ENCODE measurements at regions of chr3 and their contacts with region 1.

Region 1: DNA sequence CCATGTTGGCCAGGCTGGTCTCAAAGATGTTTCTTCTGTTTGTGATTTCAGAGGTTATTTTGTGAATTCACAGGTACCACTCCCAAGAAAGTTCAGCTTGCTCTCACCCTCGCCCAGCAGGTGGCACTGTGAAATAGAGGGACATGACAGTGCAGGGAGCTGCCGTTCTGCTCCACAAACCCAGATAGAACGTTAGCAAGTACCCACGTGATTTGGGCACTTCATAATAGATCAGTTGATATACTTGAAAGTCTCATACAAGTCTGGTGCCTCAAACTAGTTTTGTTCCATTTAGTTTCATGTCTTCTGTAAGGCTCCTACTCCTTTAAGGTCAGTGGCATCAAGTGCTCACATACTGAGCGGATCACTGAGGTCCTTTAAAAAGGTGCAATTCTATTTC is 45.5 kb downstream of the FILIP1L start:
- DNase-seq: peak; percentile 69
- H3K4me3 ChIP-seq: no peak overlapping the region
- H3K27ac ChIP-seq: no peak overlapping the region
- H3K4me1 ChIP-seq: peaks cover 4% of the 10 kb centered on the region
- CTCF ChIP-seq: peak; percentile 84

Region 2: DNA sequence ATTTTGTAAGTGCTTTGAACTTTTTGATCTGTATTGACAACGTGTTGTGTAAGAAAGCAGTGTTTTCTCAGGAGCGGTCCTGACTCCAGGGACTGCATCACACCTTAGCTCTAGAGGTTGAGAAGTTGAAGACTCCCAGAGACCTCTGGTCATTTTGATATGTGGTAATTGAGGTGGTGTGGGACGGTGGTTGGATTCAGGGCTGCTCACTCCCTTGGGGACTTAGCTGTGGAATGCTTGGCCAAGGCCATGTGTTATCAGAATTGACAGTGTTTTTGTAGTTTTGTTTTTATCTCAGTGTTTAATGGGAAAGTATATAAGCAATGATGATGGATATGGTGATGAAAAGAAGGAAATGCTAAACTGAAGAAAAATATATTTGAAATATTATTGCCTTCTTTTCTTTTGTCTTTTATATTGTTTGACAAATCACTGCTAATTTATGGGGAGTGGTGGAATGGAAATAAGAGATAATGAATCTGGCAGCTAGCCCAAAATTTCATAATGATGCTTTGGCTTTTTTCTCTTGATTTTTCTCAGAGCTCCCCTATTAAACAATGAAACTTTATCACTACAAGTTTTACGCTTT is 235.1 kb before region 1 on chr3:
- CTCF ChIA-PET with region 1: no interaction called
- POLR2A ChIA-PET with region 1: no interaction called
- intact Hi-C with region 1: loop called (anchors 5 kb)
- DNase-seq: no peak
- H3K4me3 ChIP-seq: no peak overlapping the region
- H3K27ac ChIP-seq: no peak overlapping the region
- H3K4me1 ChIP-seq: no peaks in the 10 kb centered on the region
- CTCF ChIP-seq: no peak

Region 3: DNA sequence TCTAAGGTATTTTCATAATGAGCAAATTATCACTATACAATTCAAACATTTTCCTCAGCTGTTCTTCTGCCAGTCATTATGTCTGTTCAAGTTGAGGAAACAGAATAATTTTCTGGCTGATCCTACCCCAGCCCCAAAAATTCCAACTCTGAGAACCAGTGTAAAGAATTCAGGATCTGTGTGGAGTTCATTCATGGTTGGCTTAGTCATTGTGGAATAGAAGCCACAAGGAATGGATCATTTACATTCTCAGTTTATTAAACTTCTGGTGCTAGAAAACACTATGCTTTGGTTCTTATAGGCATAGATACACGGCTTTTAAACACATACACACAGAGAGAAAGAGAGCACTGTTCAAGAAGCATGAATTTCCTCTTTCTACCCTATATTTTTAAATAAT is 116.5 kb before region 1 on chr3:
- CTCF ChIA-PET with region 1: no interaction called
- POLR2A ChIA-PET with region 1: no interaction called
- intact Hi-C with region 1: no loop called
- DNase-seq: no peak
- H3K4me3 ChIP-seq: no peak overlapping the region
- H3K27ac ChIP-seq: no peak overlapping the region
- H3K4me1 ChIP-seq: no peaks in the 10 kb centered on the region
- CTCF ChIP-seq: no peak

Region 4: GRCh38 chr3:99962703-99963102 is 106.1 kb before region 1 on chr3:
- CTCF ChIA-PET with region 1: no interaction called
- POLR2A ChIA-PET with region 1: no interaction called
- intact Hi-C with region 1: no loop called
- DNase-seq: no peak
- H3K4me3 ChIP-seq: no peak overlapping the region
- H3K27ac ChIP-seq: no peak overlapping the region
- H3K4me1 ChIP-seq: no peaks in the 10 kb centered on the region
- CTCF ChIP-seq: no peak

Region 5: DNA sequence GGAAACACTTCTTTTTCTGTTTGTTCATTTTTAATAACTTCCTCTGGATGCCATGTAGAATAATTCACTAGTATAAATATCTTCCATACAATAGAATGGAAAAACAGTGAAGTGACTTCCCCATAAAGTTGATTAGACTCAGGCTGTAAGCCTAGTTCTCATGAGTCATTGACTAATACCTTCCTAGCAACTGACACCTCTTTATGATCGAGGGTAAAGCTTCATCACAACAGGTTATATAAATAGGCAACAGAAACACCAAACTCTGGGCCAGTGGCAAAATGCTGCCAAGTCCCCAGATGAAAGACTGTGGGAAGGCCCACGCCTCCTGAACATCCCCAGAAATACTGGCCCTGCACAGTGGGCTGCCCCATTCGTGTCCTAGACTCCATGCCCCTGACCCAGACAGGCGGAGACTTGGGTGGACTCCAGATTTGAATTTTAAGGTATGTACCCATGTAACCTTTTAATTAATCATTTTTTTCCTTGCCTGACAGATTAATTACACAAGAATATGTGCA is 120.7 kb after region 1 on chr3:
- CTCF ChIA-PET with region 1: no interaction called
- POLR2A ChIA-PET with region 1: no interaction called
- intact Hi-C with region 1: no loop called
- DNase-seq: no peak
- H3K4me3 ChIP-seq: no peak overlapping the region
- H3K27ac ChIP-seq: no peak overlapping the region
- H3K4me1 ChIP-seq: no peaks in the 10 kb centered on the region
- CTCF ChIP-seq: no peak

Region 6: DNA sequence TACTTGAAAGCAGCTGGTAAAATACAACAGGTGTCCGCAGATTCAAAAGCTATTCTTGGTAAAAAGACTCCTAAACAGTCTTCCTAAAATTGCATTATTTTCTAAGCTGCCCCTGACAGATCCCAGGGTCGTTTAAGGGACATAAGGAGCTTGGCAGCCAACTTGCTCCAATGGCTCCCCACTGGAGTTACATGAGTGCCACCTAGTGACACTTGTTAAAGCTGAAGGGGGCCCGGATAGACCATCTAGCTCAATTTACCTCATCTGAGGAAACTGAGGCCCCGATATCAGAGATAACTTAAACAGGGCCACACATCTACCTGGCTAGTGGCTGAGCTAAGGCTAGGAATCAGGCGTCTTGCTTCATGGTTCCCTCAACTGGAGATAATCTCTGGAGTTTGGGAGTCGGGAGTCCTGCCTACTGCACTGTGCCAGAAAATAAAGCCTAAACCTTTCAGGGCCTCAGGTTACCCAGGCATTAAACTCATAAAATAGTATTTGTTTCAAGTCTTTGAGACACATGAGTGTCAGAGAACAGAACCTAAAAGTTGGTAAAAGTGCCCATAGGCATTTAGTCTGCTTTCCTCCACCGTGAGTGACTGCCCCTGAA is 185.4 kb after region 1 on chr3:
- CTCF ChIA-PET with region 1: interaction called, 12 read pairs
- POLR2A ChIA-PET with region 1: interaction called, 5 read pairs
- intact Hi-C with region 1: loop called (anchors 1 kb)
- DNase-seq: peak; percentile 68
- H3K4me3 ChIP-seq: no peak overlapping the region
- H3K27ac ChIP-seq: no peak overlapping the region
- H3K4me1 ChIP-seq: no peaks in the 10 kb centered on the region
- CTCF ChIP-seq: peak; percentile 86

Measured in OCI-LY7 (cell line).